ENCODE measurements at regions of chr11 and their contacts with region 1.

Region 1: DNA sequence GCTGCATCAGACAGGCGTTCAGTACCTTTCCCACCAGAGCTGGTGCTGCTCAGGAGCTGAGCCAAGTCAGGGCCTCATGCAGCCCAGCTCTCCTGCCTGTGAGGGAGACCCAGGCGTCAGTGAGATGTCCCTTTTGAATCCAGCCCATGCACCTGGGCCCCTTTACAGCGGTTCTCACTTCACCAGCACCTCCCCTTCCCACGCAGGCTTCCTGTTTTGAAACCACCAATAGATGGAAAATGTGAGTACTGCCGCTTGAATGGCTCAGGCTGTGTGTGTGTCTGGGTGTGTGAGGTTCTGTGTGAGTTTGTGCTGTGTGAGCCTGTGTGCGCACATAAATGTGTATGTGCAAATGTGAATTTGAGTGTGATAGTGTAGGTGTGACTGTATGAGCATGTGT is 88.4 kb downstream of the UBASH3B start:
- DNase-seq: peak; percentile 90
- ATAC-seq: peak; percentile 66
- H3K4me3 Mint-ChIP-seq: no peak overlapping the region
- H3K27ac Mint-ChIP-seq: no peak overlapping the region
- H3K4me1 Mint-ChIP-seq: peaks cover 14% of the 10 kb centered on the region
- H3K27me3 Mint-ChIP-seq: peaks cover 6% of the 10 kb centered on the region

Region 2: DNA sequence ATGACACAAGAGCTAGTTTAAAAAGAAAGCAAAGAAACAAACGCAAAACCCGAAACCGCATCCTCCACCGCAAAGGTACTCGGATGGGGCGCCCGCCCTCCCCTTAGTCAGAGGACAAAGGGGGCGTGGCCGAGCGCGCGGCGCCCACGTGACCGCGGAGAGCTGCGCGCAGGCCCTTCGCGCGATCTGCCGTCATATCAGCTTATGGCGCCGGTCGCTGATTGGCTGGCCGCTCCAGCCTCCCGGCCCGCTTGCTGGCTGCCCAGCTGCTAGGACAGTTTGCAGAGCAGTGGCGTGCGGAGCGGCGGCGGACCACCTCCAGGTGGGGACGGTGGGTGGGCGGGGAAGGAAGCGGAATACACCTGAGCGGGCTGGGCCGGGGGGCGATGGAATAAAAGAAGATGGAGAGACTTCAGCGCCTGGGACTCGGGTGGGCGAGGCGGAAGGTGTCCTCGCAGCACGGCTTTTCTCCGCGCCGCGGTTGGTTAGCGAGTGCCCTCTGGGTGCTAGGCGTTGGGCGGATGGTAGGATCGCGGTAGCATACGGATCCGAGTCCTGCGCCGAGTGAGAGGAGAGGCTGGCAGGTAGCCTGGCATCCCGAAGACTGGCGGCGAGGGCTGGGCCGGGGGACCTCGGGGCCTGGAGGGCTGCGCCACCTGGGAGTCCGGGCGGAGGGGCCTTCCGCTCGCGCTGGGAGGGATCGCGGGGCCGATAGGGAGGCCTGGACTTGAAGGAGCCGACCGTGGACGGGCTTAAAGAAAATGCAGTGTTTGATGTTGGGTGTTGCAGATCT is 1451.3 kb before region 1 on chr11 and contains the start of gene SC5D:
- CTCF ChIA-PET with region 1: no interaction called
- POLR2A ChIA-PET with region 1: no interaction called
- intact Hi-C with region 1: loop called in 1 of 2 experiments (anchors 5 kb)
- DNase-seq: peak; percentile 97
- ATAC-seq: peak; percentile 95
- H3K4me3 Mint-ChIP-seq: peak within 1 kb of the TSS; percentile 81
- H3K27ac Mint-ChIP-seq: peak within 1 kb of the TSS; percentile 91
- H3K4me1 Mint-ChIP-seq: peaks cover 36% of the 10 kb centered on the region
- H3K27me3 Mint-ChIP-seq: no peaks in the 10 kb centered on the region
- total RNA-seq, gene SC5D: 22.3 to 29.9 TPM

Region 3: DNA sequence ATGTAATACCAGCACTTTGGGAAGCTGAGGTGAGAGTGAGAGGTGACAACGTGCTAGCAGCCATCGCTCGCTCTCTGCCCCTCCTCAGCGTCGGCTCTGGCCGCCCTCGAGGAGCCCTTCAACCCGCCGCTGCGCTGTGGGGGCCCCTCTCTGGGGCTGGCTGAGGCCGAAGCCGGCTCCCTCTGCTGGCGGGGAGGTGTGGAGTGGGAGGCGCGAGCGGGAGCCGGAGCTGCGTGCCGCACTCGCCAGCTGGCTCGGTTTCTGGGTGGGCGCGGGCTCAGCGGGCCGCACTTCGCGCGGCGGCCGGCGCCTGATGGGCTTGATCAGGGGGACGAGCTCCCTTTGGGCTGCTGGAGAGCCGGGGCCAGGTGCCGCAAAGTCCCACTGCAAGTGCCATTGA is 187.3 kb before region 1 on chr11:
- CTCF ChIA-PET with region 1: no interaction called
- POLR2A ChIA-PET with region 1: no interaction called
- intact Hi-C with region 1: no loop called
- DNase-seq: peak; percentile 45
- ATAC-seq: peak; percentile 33
- H3K4me3 Mint-ChIP-seq: no peak overlapping the region
- H3K27ac Mint-ChIP-seq: no peak overlapping the region
- H3K4me1 Mint-ChIP-seq: no peaks in the 10 kb centered on the region
- H3K27me3 Mint-ChIP-seq: peaks cover 18% of the 10 kb centered on the region

Region 4: GRCh38 chr11:122673701-122674100 is 70.2 kb before region 1 on chr11:
- CTCF ChIA-PET with region 1: interaction called, 14 read pairs
- POLR2A ChIA-PET with region 1: interaction called, 4 read pairs
- intact Hi-C with region 1: loop called (anchors 1 kb)
- DNase-seq: no peak
- ATAC-seq: no peak
- H3K4me3 Mint-ChIP-seq: no peak overlapping the region
- H3K27ac Mint-ChIP-seq: no peak overlapping the region
- H3K4me1 Mint-ChIP-seq: peaks cover 73% of the 10 kb centered on the region
- H3K27me3 Mint-ChIP-seq: no peaks in the 10 kb centered on the region

Region 5: GRCh38 chr11:122697636-122698167 is 46.2 kb before region 1 on chr11:
- CTCF ChIA-PET with region 1: interaction called, 7 read pairs
- POLR2A ChIA-PET with region 1: interaction called, 7 read pairs
- intact Hi-C with region 1: loop called (anchors 1 to 2 kb)
- DNase-seq: peak; percentile 61
- ATAC-seq: peak; percentile 79
- H3K4me3 Mint-ChIP-seq: peak overlapping the region; percentile 17
- H3K27ac Mint-ChIP-seq: peak overlapping the region; percentile 82
- H3K4me1 Mint-ChIP-seq: peaks cover 82% of the 10 kb centered on the region
- H3K27me3 Mint-ChIP-seq: no peaks in the 10 kb centered on the region

Region 6: GRCh38 chr11:122727101-122727929 is 16.6 kb before region 1 on chr11:
- CTCF ChIA-PET with region 1: interaction called, 5 read pairs
- POLR2A ChIA-PET with region 1: interaction called, 7 read pairs
- intact Hi-C with region 1: loop called (anchors 1 kb)
- DNase-seq: peak; percentile 63
- ATAC-seq: peak; percentile 68
- H3K4me3 Mint-ChIP-seq: peak overlapping the region; percentile 55
- H3K27ac Mint-ChIP-seq: peak overlapping the region; percentile 76
- H3K4me1 Mint-ChIP-seq: peaks cover 66% of the 10 kb centered on the region
- H3K27me3 Mint-ChIP-seq: no peaks in the 10 kb centered on the region

Region 7: DNA sequence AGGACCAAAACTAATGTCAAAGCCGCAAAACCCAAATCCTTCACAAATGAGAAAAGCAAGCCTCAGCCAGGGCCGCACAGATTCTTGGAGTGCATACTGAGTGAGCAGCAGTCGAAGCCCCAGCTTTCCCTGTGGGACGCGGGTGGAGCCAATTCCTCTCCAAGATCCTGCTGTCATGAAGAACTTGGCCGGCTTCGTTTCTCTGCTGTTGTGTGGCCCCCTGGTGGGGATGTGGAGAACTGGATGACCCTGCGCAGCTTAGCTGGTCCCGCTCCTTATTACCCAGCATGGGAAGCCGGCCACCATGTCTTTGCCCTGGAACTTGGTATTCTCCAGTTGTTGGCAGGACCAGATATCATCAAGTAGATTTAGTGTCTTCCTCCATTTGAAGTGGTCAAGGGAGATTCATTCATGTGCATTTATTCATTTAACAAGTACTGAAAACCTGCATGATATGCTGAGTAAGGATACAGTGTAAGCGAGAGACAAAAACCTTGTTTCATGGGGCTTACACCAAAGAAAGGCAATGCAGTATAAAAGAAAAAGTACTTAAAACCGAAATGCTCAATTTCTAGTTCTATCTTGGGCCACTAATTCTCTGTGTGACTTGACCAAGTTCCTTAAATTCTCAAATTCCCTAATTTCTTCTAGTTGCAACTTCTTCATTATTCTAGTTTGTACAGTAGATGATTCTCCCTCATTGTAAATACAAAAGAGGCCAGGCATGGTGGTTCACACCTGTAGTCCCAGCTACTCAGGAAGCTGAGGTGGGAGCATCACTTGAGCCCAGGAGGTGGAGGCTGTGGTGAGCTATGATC is 37.6 kb after region 1 on chr11:
- CTCF ChIA-PET with region 1: interaction called, 5 read pairs
- POLR2A ChIA-PET with region 1: no interaction called
- intact Hi-C with region 1: loop called (anchors 1 kb)
- DNase-seq: peak; percentile 87
- ATAC-seq: peak; percentile 74
- H3K4me3 Mint-ChIP-seq: no peak overlapping the region
- H3K27ac Mint-ChIP-seq: no peak overlapping the region
- H3K4me1 Mint-ChIP-seq: peaks cover 21% of the 10 kb centered on the region
- H3K27me3 Mint-ChIP-seq: no peaks in the 10 kb centered on the region

Region 8: GRCh38 chr11:123381817-123382554 is 638.0 kb after region 1 on chr11:
- CTCF ChIA-PET with region 1: no interaction called
- POLR2A ChIA-PET with region 1: no interaction called
- intact Hi-C with region 1: loop called in 1 of 2 experiments (anchors 5 kb)
- DNase-seq: peak; percentile 81
- ATAC-seq: peak; percentile 91
- H3K4me3 Mint-ChIP-seq: no peak overlapping the region
- H3K27ac Mint-ChIP-seq: peak overlapping the region; percentile 78
- H3K4me1 Mint-ChIP-seq: peaks cover 29% of the 10 kb centered on the region
- H3K27me3 Mint-ChIP-seq: peaks cover 4% of the 10 kb centered on the region

Measured in activated CD4-positive, alpha-beta T cell treated with anti-CD3 and anti-CD28 coated beads for 36 hours (primary cell).